Activated CD4-positive, alpha-beta T cell treated with anti-CD3 and anti-CD28 coated beads, Interleukin-2, amount 10 ng/mL, durations not matched to agents 24 days and 14 days (primary cell): ENCODE measurements at regions of chr14 and their contacts with region 1.

Region 1: GRCh38 chr14:87896393-87897380 is 96.3 kb downstream of the GALC start:
- DNase-seq: peak; percentile 59
- H3K4me3 Mint-ChIP-seq: no peak overlapping the region
- H3K27ac Mint-ChIP-seq: no peak overlapping the region
- H3K4me1 Mint-ChIP-seq: no peaks in the 10 kb centered on the region
- H3K27me3 Mint-ChIP-seq: peaks cover 29% of the 10 kb centered on the region

Region 2: DNA sequence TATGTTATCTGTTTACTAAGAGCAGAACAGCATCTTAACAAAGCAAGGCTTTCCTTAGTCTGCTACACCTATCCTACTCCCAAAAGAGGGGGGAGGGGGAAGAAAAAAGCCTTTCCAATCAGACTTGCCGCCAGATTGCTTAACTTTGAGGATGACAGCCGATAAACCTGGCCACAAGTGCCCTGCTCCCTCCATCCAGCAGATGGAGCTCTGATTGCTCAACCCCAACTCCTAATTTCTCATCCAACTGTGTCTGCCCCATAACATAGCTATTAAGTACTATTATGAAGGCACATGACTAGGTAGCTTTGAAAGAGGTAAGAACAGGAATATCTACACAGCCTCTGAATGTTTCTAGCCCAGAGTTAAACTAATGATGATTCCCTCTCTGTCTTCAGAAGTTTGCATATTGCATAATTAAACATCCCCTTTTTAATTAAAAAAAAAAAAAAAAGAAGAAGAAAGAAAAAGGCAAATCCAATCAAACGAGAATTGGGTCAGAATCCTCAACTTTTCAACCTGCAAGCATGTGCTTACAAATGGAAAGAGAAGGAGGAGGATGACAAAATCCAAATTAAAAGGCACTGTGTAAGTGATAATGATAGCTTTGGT is 151.1 kb before region 1 on chr14:
- intact Hi-C with region 1: loop called (anchors 2 kb)
- DNase-seq: peak; percentile 63
- H3K4me3 Mint-ChIP-seq: no peak overlapping the region
- H3K27ac Mint-ChIP-seq: no peak overlapping the region
- H3K4me1 Mint-ChIP-seq: no peaks in the 10 kb centered on the region
- H3K27me3 Mint-ChIP-seq: peaks cover 2% of the 10 kb centered on the region

Region 3: GRCh38 chr14:87805315-87805723 is 91.4 kb before region 1 on chr14:
- intact Hi-C with region 1: loop called (anchors 1 kb)
- DNase-seq: peak; percentile 84
- H3K4me3 Mint-ChIP-seq: no peak overlapping the region
- H3K27ac Mint-ChIP-seq: no peak overlapping the region
- H3K4me1 Mint-ChIP-seq: peaks cover 2% of the 10 kb centered on the region
- H3K27me3 Mint-ChIP-seq: no peaks in the 10 kb centered on the region